ENCODE measurements at regions of chr5 and their contacts with region 1.

Region 1: DNA sequence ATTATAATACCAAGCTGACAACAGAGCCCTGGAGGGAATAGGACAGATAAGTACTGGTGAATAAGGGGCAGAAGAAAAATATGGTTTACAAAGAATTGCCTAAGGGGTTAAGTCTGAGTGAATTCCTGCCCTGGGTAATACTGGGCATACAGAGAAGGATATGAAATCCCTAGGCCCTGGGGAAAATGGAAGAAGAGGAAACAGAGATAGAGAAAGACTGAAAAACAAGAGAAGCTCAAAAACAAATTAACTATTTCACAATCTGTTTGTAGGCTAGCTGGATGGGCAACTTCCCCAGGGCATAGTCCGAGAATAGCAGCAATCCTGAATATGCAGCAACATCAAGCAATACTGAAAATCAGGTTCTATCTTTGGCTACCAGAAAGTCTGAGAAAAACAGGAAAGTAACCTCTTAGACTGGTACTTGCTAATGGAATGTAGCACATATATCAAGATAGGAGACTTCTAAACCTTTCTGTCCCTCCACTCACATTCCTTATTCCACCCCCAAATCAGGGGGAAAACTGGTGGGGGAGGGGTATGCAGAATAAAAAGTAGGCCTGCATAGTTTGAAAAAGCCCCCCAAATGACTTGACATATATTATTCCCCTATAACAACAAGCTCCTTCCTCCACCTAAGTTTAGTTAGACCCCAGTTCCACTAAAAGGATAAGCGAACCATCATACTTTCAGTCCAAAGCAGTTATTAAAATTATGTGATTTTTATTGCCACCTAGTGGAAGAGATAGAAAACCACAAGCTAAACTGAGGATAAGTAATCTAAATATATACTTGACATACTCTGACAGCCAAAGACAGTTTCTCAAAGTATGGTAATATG is 20.6 kb downstream of the SLC38A9 start:
- DNase-seq: no peak

Region 2: GRCh38 chr5:55172051-55172899 is 519.2 kb before region 1 on chr5:
- intact Hi-C with region 1: loop called (anchors 5 kb)
- DNase-seq: peak in 6 of 10 donors; percentile 16 to 80 (median 39)

Region 3: GRCh38 chr5:55324815-55325418 is 366.6 kb before region 1 on chr5:
- intact Hi-C with region 1: loop called (anchors 5 kb)
- DNase-seq: no peak

Region 4: GRCh38 chr5:55344392-55344992 is 347.0 kb before region 1 on chr5:
- intact Hi-C with region 1: loop called (anchors 2 kb)
- DNase-seq: peak in 7 of 10 donors; percentile 35 to 88 (median 69)

Region 5: DNA sequence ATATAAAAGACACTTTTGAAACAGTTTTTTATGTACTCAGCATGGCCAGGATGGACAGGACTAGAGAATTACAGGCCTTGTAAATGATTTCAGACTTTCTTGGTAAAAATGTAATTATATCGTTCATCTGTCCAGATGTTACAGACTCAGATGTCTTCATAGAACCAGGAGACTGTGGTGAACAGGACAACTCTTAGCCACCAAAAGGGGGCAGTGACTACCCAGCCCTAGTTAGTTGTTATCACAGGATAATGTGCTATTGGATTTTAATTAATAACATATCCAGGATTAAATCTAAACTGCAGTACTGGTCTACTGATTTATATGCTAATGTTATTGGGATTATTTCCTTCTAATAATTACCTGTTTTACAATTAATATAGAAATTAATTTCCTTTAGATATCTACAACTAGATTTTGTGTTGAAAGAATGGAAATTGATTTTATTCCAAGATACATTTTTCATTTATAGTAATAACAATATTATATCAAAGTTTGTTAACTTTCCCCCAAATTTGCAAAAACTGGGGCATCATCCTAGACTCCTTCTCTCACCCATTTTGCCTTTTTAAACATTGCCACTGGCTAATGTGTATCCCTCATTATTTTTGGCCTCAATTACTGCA is 284.3 kb before region 1 on chr5:
- intact Hi-C with region 1: loop called (anchors 2 kb)
- DNase-seq: peak in 2 of 10 donors; percentile 58 to 85

Measured in posterior cingulate gyrus (tissue), 11 donors.